A549 (cell line): ENCODE measurements at regions of chr17 and their contacts with region 1.

Region 1: GRCh38 chr17:20797292-20797691 is 217.8 kb downstream of the CDRT15L2 start:
- DNase-seq: no peak
- ATAC-seq: no peak
- H3K4me3 ChIP-seq: no peak overlapping the region
- H3K27ac ChIP-seq: no peak overlapping the region
- H3K4me1 ChIP-seq: no peaks in the 10 kb centered on the region
- CTCF ChIP-seq: no peak
- EP300 ChIP-seq: no peak
- POLR2A ChIP-seq: no peak
- RAD21 ChIP-seq: no peak

Region 2: DNA sequence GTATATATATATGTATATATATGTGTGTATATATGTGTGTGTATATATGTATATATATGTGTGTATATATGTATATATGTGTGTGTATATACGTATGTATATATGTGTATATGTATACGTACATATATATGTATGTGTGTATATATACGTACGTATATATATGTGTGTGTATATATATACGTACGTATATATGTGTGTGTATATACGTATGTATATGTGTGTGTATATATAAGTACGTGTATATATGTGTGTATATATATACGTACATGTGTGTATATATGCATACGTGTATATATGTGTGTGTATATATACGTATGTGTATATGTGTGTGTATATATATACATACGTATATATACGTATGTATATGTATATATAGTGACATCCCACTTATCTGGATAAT is 63.4 kb before region 1 on chr17:
- CTCF ChIA-PET with region 1: no interaction called
- POLR2A ChIA-PET with region 1: no interaction called
- DNase-seq: no peak
- ATAC-seq: no peak
- H3K4me3 ChIP-seq: no peak overlapping the region
- H3K27ac ChIP-seq: no peak overlapping the region
- H3K4me1 ChIP-seq: no peaks in the 10 kb centered on the region
- CTCF ChIP-seq: no peak
- EP300 ChIP-seq: no peak
- POLR2A ChIP-seq: no peak
- RAD21 ChIP-seq: no peak

Region 3: DNA sequence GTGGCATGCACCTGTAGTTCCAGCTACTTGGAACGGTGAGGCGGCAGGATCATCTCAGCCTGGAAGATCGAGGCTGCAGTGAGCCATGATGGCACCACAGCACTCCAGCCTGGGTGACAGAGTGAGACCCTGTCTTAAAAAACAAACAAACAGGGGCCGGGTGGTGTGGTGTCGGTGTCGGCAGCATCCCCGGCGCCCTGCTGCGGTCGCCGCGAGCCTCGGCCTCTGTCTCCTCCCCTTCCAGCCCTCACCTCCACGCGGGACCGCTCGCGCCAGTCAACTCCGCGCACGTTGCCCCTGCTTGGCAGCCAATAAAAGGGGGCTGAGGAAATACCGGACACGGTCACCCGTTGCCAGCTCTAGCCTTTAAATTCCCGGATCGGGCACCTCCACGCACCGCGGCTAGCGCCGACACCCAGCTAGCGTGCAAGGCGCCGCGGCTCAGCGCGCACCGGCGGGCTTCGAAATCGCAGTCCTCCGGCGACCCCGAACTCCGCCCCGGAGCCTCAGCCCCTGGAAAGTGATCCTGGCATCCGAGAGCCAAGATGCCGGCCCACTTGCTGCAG is 13.1 kb before region 1 on chr17:
- CTCF ChIA-PET with region 1: interaction called, 32 read pairs
- POLR2A ChIA-PET with region 1: no interaction called
- DNase-seq: no peak
- ATAC-seq: peak; percentile 48 to 58; a peak in 2 of 6 replicates
- H3K4me3 ChIP-seq: no peak overlapping the region
- H3K27ac ChIP-seq: no peak overlapping the region
- H3K4me1 ChIP-seq: no peaks in the 10 kb centered on the region
- CTCF ChIP-seq: no peak
- EP300 ChIP-seq: no peak
- POLR2A ChIP-seq: no peak
- RAD21 ChIP-seq: no peak

Region 4: DNA sequence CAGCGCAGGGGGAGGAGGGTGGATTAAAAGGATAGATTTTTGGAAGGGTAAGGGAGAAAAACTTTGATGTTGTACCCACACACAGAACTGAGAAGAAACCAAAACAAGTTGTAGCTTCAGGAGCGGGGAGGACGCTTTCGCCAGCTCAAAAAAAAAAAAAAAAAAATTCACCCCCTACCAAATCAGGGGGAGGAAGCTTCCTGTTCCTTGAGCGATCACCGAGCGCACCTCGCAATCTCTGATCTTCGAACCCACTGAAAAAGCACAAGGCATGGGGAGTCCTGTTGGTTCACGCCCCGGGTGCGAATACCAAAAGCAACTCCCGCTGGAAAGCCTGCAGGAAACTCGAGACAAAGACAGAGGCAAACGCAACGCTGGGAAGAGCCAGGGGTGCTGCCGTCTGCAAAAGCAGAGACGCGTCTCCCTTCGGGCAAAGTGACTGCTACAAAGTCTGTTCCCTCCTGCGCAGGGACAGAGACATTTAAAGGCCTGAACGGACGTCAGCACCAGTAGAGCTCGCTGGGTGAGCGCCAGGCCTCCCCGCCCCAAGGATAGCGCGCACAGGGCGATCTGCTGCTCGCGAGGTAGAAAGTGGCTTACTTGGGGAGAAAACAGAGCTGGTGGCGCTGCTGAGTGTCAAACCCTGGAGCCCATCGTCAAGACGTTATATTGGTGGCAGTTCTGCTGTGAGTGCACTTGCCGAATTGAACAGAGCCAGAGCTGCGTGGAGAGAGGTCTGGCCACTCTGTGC is 55.1 kb after region 1 on chr17:
- CTCF ChIA-PET with region 1: interaction called, 17 read pairs
- POLR2A ChIA-PET with region 1: no interaction called
- DNase-seq: peak in 1 of 2 experiments; percentile 48
- ATAC-seq: peak; percentile 82
- H3K4me3 ChIP-seq: peak overlapping the region; percentile 29; the same call in 2 of the 3 replicates
- H3K27ac ChIP-seq: no peak overlapping the region
- H3K4me1 ChIP-seq: no peaks in the 10 kb centered on the region
- CTCF ChIP-seq: no peak
- EP300 ChIP-seq: no peak
- POLR2A ChIP-seq: no peak
- RAD21 ChIP-seq: no peak

Region 5: GRCh38 chr17:20955427-20956323 is 158.4 kb after region 1 on chr17:
- CTCF ChIA-PET with region 1: no interaction called
- POLR2A ChIA-PET with region 1: no interaction called
- DNase-seq: no peak
- ATAC-seq: no peak
- H3K4me3 ChIP-seq: no peak overlapping the region
- H3K27ac ChIP-seq: no peak overlapping the region
- H3K4me1 ChIP-seq: peaks cover 7% of the 10 kb centered on the region; the same call in 1 of the 3 replicates
- CTCF ChIP-seq: no peak
- EP300 ChIP-seq: no peak
- POLR2A ChIP-seq: no peak
- RAD21 ChIP-seq: no peak